ENCODE measurements at regions of chr22 and their contacts with region 1.

Region 1: DNA sequence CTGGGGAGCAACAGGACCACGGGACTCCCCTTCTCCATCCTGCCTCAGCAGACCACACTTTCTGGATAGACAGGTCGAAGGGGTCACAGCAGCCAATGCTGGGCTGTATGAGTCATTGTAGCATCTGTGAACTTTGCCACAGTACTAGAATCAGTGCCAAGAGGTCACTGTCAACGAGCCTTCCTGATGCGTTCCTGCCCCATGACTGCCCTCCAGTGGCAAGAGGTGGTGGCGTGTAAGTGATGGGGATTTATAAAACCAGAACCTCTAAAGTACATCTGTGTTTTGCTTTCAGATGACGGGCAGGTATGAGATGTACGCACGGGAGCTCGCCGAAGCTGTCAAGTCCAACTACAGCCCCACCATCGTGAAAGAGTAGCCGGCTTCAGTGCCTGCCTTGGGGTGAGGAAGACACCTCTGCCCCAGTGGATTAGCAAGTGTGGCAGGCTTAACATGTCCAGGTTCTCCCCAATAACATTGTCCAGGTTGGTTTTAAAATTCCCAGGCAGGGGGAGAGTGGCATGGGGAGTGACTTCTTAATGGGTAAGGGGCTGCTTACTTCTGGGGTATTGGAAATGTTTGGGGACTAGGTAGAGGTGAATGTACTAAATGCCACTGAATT is 29.4 kb downstream of the GUCD1 start:
- DNase-seq: peak in 1 of 2 donors; percentile 85
- H3K4me3 ChIP-seq: no peak overlapping the region
- H3K27ac ChIP-seq: peak overlapping the region in 1 of 2 donors; percentile 71
- H3K4me1 ChIP-seq: peaks cover 0 to 4% of the 10 kb centered on the region in 2 donors
- H3K27me3 ChIP-seq: no peaks in the 10 kb centered on the region
- CTCF ChIP-seq: peak; percentile 63 to 84 (median 74)

Region 2: DNA sequence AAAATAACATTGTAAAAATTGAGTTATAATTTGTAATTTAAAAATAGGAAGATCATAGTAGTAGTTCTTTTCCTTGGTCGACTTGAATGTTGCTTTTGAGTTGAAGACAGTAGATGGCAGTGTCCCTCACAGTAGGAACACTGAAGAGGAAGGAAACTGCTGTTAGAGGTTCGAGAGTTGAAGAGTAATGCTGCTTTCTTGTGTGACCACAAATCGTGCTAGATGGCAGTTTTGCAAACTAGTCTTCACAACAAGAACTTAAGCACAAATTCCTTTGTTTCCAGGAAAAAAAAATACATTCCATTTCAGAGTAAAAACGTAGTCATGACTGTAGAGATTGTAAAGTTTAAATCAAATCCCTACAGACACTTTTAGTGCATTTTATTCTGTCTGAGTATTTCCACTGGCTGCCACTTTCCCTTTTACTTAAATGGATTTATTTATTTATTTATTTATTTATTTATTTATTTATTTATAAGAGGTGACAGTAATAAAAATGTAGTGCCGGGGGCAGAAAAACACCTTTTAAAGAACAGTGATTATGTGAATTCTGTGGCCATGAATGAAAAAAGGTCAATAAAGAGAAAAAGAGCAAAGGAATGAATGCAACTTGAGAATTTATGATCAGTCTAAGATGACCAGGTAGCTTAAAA is 200.3 kb before region 1 on chr22:
- intact Hi-C with region 1: loop called (anchors 5 kb)
- DNase-seq: no peak
- H3K4me3 ChIP-seq: no peak overlapping the region
- H3K27ac ChIP-seq: no peak overlapping the region
- H3K4me1 ChIP-seq: peaks cover 3 to 4% of the 10 kb centered on the region in 2 donors
- H3K27me3 ChIP-seq: no peaks in the 10 kb centered on the region
- CTCF ChIP-seq: peak; percentile 52 to 74 (median 59)

Measured in ascending aorta (tissue), 2 donors.